Panc1 (cell line): ENCODE measurements at regions of chr11 and their contacts with region 1.

Region 1: DNA sequence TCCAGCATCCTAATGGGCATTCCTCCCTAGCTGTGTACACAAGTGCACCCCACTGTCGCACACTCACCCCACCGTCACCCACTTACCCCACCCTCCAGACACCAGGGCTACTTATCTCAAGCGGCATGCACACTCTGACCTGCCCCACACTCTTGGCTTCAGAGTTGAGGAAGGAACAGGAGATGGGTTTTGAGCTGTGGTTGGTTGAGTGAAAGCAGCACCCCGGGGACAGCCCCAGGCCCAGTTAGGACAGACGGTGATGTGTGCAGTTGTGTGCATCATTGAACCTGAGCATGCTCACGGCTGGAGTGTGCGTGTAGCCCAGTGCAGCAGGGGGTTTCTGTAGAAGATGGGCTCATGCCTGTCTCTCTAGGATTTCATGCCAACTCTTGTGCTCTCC is 32.5 kb downstream of the AHNAK start:
- DNase-seq: no peak
- ATAC-seq: peak; percentile 10
- H3K4me3 ChIP-seq: no peak overlapping the region
- H3K27ac ChIP-seq: peak overlapping the region; percentile 99
- H3K4me1 ChIP-seq: peaks cover 91% of the 10 kb centered on the region
- H3K27me3 ChIP-seq: no peaks in the 10 kb centered on the region
- CTCF ChIP-seq: no peak

Region 2: DNA sequence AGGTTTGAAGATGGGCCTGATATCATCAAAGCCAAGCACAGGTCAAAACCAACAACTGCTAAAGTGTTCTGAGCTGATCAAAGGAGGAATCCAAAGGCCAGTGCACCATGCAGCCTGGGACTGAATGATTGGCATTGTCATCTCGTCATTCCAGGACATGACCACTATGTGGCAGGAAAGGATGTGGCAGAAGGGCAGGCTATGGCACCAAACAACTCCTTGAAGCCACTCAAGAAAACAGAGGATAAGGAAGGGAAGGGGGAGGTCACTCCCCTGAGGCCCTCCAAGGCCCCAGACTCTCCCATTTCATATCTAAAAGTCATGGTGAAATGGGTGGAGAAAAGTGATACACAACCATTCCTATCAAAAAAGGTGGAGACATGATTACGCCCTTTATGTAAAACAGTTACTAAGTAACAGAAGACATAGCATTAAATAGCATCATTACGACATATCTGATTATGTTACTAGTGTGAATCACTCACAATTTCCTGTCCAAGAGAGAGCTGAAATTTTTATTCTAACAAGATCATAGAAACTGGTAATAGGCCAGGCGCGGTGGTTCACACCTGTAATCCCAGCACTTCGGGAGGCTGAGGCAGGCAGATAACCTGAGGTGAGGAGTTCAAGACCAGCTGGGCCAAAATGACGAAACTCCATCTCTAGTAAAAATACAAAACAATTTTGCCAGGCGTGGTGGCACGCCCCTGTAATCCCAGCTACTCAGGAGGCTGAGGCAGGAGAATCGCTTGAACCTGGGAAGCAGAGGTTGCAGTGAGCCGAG is 16.8 kb before region 1 on chr11:
- CTCF ChIA-PET with region 1: interaction called, 14 read pairs
- POLR2A ChIA-PET with region 1: no interaction called
- in situ Hi-C with region 1: no loop called
- intact Hi-C with region 1: no loop called
- DNase-seq: peak; percentile 77
- ATAC-seq: peak; percentile 85
- H3K4me3 ChIP-seq: no peak overlapping the region
- H3K27ac ChIP-seq: peak overlapping the region; percentile 99
- H3K4me1 ChIP-seq: peaks cover 38% of the 10 kb centered on the region
- H3K27me3 ChIP-seq: no peaks in the 10 kb centered on the region
- CTCF ChIP-seq: peak; percentile 82; the same call in 1 of the 2 replicates

Region 3: GRCh38 chr11:62652161-62653006 is 138.2 kb after region 1 on chr11:
- CTCF ChIA-PET with region 1: no interaction called
- POLR2A ChIA-PET with region 1: interaction called, 13 read pairs
- in situ Hi-C with region 1: no loop called
- intact Hi-C with region 1: no loop called
- DNase-seq: no peak
- ATAC-seq: no peak
- H3K4me3 ChIP-seq: peak overlapping the region; percentile 86 to 93
- H3K27ac ChIP-seq: peak overlapping the region; percentile 97
- H3K4me1 ChIP-seq: peaks cover 8% of the 10 kb centered on the region
- H3K27me3 ChIP-seq: no peaks in the 10 kb centered on the region
- CTCF ChIP-seq: no peak

Region 4: DNA sequence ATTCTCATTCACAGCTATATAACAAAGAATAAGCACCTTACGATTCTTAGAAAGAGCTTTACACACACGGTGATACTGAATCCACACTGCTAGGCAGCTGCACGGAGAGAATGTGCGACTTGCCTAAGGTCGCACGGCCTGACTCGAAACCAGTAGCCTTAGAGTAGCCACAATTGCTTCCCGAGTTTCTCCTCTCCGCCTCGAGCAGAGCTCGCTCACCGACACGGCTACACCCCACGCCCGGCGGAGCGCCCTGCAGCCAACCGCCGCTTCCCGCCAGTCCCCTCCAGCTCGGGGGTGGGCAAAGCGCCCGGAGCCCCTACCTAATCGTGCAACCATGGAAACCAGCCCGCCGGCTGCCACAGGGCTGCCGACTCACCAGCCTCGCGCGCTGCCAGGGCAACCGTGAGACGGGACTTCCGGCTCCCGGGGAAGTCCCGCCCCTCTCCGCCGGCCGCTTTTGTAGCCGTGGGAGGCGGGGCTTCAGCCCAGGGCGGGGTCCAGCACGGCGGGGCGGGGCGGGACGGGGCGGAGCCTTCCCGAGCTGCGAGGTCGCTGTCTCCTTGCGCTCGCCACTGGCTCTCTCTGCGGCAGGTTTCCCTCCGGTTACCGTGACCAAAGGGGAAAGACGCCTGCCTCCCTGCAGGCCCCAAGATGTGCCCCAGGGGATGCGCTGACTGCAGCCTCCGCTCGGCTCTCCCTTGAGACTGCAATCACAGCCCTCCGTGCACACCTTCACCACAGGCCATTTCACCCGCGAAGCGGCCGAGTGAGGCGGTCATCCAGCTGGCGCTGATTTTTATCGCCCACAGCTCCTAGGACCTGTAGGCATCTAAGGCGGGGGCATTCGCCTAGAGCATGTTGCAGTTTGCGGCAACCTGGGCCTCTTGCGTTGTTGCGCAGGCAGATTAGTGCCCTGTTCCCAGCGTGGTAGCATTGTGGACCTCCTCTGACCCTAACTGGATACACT is 192.0 kb after region 1 on chr11:
- CTCF ChIA-PET with region 1: no interaction called
- POLR2A ChIA-PET with region 1: interaction called, 18 read pairs
- in situ Hi-C with region 1: no loop called
- intact Hi-C with region 1: no loop called
- DNase-seq: no peak
- ATAC-seq: peak; percentile 91
- H3K4me3 ChIP-seq: peak overlapping the region; percentile 77 to 89
- H3K27ac ChIP-seq: peak overlapping the region; percentile 89
- H3K4me1 ChIP-seq: peaks cover 23% of the 10 kb centered on the region
- H3K27me3 ChIP-seq: no peaks in the 10 kb centered on the region
- CTCF ChIP-seq: no peak